Colonic mucosa (tissue), 4 donors: ENCODE measurements at regions of chr9 and their contacts with region 1.

Region 1: DNA sequence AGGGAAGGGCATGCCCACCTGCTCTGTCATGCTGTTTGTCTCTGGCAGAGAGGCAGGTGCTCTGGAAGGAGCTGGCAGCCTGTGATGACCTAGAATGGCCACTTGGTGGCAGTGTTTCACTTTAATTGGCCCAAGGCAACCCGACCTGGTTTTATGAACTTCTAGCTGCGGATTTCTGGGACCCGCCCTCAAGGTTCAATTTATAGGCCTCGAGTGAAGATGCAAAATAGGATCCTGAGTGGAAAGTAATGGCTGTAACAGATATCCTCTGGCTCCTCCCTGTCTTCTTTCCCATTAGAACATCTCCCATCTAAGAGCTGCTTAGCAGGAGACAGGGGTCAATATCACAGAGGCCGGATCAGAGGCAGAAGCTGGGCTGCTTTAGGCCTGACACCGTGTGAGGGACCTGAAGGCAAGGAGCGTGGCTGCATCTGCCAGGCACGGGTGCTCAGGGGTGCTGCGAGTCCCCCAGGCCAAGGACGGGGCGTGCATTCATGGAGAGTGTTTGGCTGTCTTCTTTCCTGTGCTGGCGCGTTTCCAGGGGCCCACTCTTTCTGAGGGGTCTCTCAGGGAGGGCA is 56.7 kb upstream of the SLC28A3 start:
- DNase-seq: peak; percentile 73
- H3K4me3 ChIP-seq: no peak overlapping the region
- H3K27ac ChIP-seq: no peak overlapping the region
- H3K4me1 ChIP-seq: no peaks in the 10 kb centered on the region
- H3K27me3 ChIP-seq: no peaks in the 10 kb centered on the region
- CTCF ChIP-seq: peak; percentile 96

Region 2: DNA sequence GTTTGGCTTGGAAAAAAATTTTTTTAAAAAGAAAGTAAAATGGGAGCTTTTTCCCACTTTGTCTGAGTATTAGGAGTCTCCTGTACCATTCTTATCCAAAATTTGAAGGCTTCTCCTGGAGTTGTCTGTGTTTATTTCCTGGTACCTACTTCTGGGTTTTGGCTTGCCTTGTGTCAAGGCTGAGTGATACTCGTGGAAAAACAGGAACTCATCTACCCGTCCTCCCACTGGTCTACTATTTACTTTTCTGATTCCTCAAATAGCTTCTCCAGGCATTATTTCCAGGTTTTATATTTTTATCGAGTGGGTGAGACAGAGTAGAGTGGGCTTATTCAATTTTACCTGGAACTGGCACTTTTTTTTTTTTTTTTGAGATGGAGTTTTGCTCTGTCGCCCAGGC is 317.2 kb before region 1 on chr9:
- intact Hi-C with region 1: no loop called
- DNase-seq: no peak
- H3K4me3 ChIP-seq: no peak overlapping the region
- H3K27ac ChIP-seq: no peak overlapping the region
- H3K4me1 ChIP-seq: no peaks in the 10 kb centered on the region
- H3K27me3 ChIP-seq: no peaks in the 10 kb centered on the region
- CTCF ChIP-seq: no peak

Region 3: DNA sequence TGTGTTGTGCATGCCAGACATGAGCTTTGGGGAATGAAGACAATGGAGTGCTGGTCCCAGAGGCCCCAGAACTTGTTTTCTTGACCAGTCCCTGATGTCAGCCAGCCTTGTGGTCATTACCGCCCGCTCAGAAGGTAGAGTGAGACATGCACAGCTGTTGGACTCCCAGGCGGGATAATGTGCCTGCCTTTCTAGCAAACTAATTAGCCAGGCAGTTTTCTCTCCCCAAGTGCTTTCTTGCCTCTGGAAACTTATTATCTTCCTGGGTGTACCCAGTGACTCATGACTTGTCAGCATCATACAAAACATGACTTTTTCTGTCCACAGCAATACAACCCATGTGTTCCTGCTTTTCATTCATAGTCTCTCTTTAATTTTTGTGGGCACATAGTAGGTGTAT is 285.5 kb before region 1 on chr9:
- intact Hi-C with region 1: no loop called
- DNase-seq: no peak
- H3K4me3 ChIP-seq: no peak overlapping the region
- H3K27ac ChIP-seq: no peak overlapping the region
- H3K4me1 ChIP-seq: no peaks in the 10 kb centered on the region
- H3K27me3 ChIP-seq: no peaks in the 10 kb centered on the region
- CTCF ChIP-seq: no peak

Region 4: GRCh38 chr9:84953797-84954705 is 556.8 kb after region 1 on chr9:
- intact Hi-C with region 1: loop called (anchors 10 kb)
- DNase-seq: peak; percentile 86
- H3K4me3 ChIP-seq: no peak overlapping the region
- H3K27ac ChIP-seq: no peak overlapping the region
- H3K4me1 ChIP-seq: no peaks in the 10 kb centered on the region
- H3K27me3 ChIP-seq: no peaks in the 10 kb centered on the region
- CTCF ChIP-seq: peak; percentile 93

Region 5: DNA sequence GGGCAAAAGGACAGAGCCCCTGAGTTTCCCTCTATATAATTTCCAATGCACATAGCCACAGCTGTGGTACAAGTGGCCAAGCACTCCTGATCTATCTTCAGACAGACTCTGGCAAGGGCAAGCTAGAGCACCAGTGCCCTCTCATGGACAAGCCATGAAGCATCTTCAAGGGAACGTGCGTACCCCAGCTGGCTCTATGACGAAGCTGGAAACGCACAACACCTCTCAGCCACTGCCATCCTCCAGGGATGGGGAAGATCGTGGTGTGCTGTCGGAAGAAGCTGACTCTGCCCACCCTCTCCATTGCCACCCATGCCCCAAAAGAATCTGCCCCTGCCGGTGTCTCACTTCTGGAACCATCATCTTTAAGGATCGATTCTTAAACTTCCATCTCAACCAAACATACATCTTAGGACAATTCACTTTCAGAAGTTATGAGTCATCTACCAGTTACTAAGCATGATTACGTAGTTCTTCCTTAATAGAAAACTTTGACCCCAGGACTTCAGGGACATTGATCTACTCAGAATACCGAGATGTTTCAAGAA is 861.7 kb after region 1 on chr9:
- intact Hi-C with region 1: loop called (anchors 5 kb)
- DNase-seq: peak; percentile 50
- H3K4me3 ChIP-seq: no peak overlapping the region
- H3K27ac ChIP-seq: no peak overlapping the region
- H3K4me1 ChIP-seq: no peaks in the 10 kb centered on the region
- H3K27me3 ChIP-seq: no peaks in the 10 kb centered on the region
- CTCF ChIP-seq: peak; percentile 22

Region 6: GRCh38 chr9:85425153-85425611 is 1027.9 kb after region 1 on chr9:
- intact Hi-C with region 1: loop called (anchors 5 kb)
- DNase-seq: peak; percentile 65
- H3K4me3 ChIP-seq: no peak overlapping the region
- H3K27ac ChIP-seq: no peak overlapping the region
- H3K4me1 ChIP-seq: no peaks in the 10 kb centered on the region
- H3K27me3 ChIP-seq: no peaks in the 10 kb centered on the region
- CTCF ChIP-seq: peak; percentile 63

Region 7: DNA sequence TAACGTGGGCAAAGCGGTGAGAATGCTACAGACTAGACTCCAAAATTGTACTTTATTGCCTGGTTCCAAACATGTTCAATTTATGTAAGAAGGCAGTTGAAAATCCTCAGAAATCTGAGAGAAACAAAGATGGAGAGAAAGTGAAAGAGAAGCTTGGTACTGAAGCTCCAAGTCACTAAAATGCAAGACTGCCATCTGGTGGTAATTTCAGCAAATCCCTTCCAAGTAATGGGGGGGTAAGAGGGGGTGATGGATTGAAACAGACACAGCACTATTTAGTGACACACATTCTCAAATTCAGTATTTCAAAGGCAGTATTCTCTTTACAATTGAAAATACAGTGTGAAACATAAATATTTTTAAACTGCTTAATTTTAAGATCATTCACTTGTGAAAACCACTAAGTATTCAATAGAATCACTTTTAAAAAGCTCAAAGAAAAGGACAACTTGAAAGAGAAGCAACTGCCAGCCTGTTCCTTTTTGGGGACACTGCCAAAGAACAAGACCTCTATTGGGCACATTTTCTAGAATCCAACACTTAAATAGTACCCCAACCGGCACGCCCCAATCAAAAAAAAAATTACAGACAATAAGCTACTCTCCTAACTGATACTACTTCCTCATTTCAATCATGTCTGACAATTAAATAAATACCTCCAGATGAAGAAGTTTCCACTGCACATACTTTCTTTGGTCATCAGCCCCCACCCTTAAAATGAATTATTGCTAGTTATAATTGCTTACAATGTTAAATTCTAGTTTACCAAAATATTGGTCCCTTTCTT is 1213.0 kb after region 1 on chr9:
- intact Hi-C with region 1: loop called (anchors 5 kb)
- DNase-seq: peak; percentile 38
- H3K4me3 ChIP-seq: no peak overlapping the region
- H3K27ac ChIP-seq: no peak overlapping the region
- H3K4me1 ChIP-seq: no peaks in the 10 kb centered on the region
- H3K27me3 ChIP-seq: no peaks in the 10 kb centered on the region
- CTCF ChIP-seq: peak; percentile 75